SK-N-SH (cell line): ENCODE measurements at regions of chr11 and their contacts with region 1.

Region 1: GRCh38 chr11:68257475-68258362 is 14.1 kb downstream of the C11orf24 start:
- DNase-seq: peak; percentile 88
- H3K4me3 ChIP-seq: peak overlapping the region in 1 of 2 experiments; percentile 13; a peak in 1 of 4 replicates
- H3K27ac ChIP-seq: no peak overlapping the region
- H3K4me1 ChIP-seq: peaks cover 0 to 4% of the 10 kb centered on the region in 2 experiments; a peak in 2 of 4 replicates
- H3K27me3 ChIP-seq: no peaks in the 10 kb centered on the region
- CTCF ChIP-seq: peak; percentile 87
- EP300 ChIP-seq: no peak
- RAD21 ChIP-seq: peak; percentile 86

Region 2: GRCh38 chr11:68213555-68214174 is 44.1 kb before region 1 on chr11:
- CTCF ChIA-PET with region 1: interaction called, 12 read pairs
- POLR2A ChIA-PET with region 1: no interaction called
- DNase-seq: peak; percentile 94
- H3K4me3 ChIP-seq: peak overlapping the region; percentile 77 to 96
- H3K27ac ChIP-seq: peak overlapping the region; percentile 88 to 97
- H3K4me1 ChIP-seq: peaks cover 11 to 27% of the 10 kb centered on the region in 2 experiments; a peak in 3 of 4 replicates
- H3K27me3 ChIP-seq: no peaks in the 10 kb centered on the region; the same call in 1 of the 2 replicates
- CTCF ChIP-seq: no peak
- EP300 ChIP-seq: no peak
- RAD21 ChIP-seq: no peak

Region 3: DNA sequence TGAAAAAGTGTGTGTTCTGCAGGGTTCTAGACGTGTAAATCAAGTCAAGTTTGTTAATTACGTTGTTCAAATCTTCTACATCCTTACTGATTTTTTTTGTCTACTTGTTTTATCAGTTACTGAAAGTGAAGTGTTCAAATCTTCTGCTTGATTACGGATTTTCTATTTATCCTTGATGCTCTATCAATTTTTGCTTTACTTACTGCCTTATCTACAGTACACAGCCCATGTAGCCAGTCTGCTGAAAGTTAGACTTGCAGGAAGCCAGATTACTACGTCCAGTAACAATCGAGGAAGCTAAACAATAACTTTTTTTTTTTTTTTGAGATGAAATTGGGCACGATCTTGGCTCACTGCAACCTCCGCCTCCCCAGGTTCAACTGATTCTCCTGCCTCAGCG is 29.7 kb after region 1 on chr11:
- CTCF ChIA-PET with region 1: interaction called, 12 read pairs
- POLR2A ChIA-PET with region 1: no interaction called
- DNase-seq: no peak
- H3K4me3 ChIP-seq: no peak overlapping the region
- H3K27ac ChIP-seq: no peak overlapping the region
- H3K4me1 ChIP-seq: no peaks in the 10 kb centered on the region
- H3K27me3 ChIP-seq: no peaks in the 10 kb centered on the region
- CTCF ChIP-seq: no peak
- EP300 ChIP-seq: no peak
- RAD21 ChIP-seq: no peak

Region 4: GRCh38 chr11:68370211-68371111 is 112.7 kb after region 1 on chr11:
- CTCF ChIA-PET with region 1: interaction called, 10 read pairs
- POLR2A ChIA-PET with region 1: no interaction called
- DNase-seq: peak; percentile 69
- H3K4me3 ChIP-seq: no peak overlapping the region
- H3K27ac ChIP-seq: peak overlapping the region in 1 of 2 experiments; percentile 100; a peak in 2 of 4 replicates
- H3K4me1 ChIP-seq: peaks cover 23 to 62% of the 10 kb centered on the region in 2 experiments
- H3K27me3 ChIP-seq: no peaks in the 10 kb centered on the region
- CTCF ChIP-seq: no peak
- EP300 ChIP-seq: no peak
- RAD21 ChIP-seq: no peak; the same call in 1 of the 2 replicates

Region 5: GRCh38 chr11:68396526-68396925 is 138.8 kb after region 1 on chr11:
- CTCF ChIA-PET with region 1: interaction called, 14 read pairs
- POLR2A ChIA-PET with region 1: no interaction called
- DNase-seq: no peak
- H3K4me3 ChIP-seq: no peak overlapping the region
- H3K27ac ChIP-seq: no peak overlapping the region
- H3K4me1 ChIP-seq: peaks cover 0 to 26% of the 10 kb centered on the region in 2 experiments; a peak in 2 of 4 replicates
- H3K27me3 ChIP-seq: no peaks in the 10 kb centered on the region
- CTCF ChIP-seq: no peak
- EP300 ChIP-seq: no peak
- RAD21 ChIP-seq: no peak

Region 6: GRCh38 chr11:68447015-68447801 is 189.5 kb after region 1 on chr11:
- CTCF ChIA-PET with region 1: interaction called, 34 read pairs
- POLR2A ChIA-PET with region 1: no interaction called
- DNase-seq: peak; percentile 92
- H3K4me3 ChIP-seq: peak overlapping the region in 1 of 2 experiments; percentile 9; a peak in 1 of 4 replicates
- H3K27ac ChIP-seq: no peak overlapping the region
- H3K4me1 ChIP-seq: peaks cover 3 to 7% of the 10 kb centered on the region in 2 experiments; a peak in 2 of 4 replicates
- H3K27me3 ChIP-seq: no peaks in the 10 kb centered on the region
- CTCF ChIP-seq: peak; percentile 87
- EP300 ChIP-seq: no peak
- RAD21 ChIP-seq: peak; percentile 88